ENCODE measurements at regions of chrX and their contacts with region 1.

Region 1: DNA sequence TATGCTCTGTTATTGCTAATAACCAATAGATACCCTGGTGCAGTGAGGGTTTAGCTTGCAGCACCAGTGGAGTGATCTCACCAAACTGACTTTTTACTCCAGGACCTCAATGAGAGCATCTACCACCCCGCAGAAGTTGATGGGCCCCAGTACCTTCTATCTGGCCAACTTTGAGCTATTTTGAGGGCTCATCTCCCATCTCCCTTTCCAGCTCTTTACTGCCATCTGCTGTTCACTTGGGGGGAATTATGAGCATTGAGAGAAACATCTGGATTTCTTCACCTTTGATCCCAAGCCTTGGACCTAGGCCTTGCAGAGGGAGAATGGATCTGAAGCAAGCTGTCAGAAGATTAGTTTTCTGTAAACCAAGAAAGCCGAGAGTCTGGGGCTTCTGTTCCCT is 143.6 kb downstream of the TMEM164 start:
- DNase-seq: peak; percentile 38
- H3K4me3 ChIP-seq: no peak overlapping the region
- H3K27ac ChIP-seq: no peak overlapping the region
- H3K4me1 ChIP-seq: no peaks in the 10 kb centered on the region
- CTCF ChIP-seq: peak; percentile 71

Region 2: DNA sequence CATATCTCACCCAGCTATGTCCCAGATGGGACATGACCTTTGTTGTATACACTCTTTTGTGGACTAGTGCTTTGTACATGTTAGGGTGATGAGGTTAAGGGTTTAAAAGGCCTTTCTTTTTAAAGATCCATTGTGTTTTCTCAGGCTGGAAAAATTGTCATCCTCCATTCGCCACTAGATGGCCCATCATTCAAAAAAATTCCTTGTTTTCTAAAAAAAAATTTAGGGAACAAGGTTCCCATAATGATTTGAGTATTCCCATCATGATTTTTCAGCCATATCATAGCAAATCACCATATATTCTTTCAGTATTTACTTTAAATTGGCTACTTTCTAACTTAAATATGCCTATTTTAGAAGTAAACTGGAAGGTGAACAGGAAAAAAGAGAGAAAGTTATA is 235.5 kb before region 1 on chrX:
- CTCF ChIA-PET with region 1: no interaction called
- POLR2A ChIA-PET with region 1: no interaction called
- intact Hi-C with region 1: loop called (anchors 10 kb)
- DNase-seq: no peak
- H3K4me3 ChIP-seq: no peak overlapping the region
- H3K27ac ChIP-seq: no peak overlapping the region
- H3K4me1 ChIP-seq: no peaks in the 10 kb centered on the region
- CTCF ChIP-seq: peak; percentile 58

Region 3: GRCh38 chrX:109934434-109934833 is 212.1 kb before region 1 on chrX:
- CTCF ChIA-PET with region 1: no interaction called
- POLR2A ChIA-PET with region 1: no interaction called
- intact Hi-C with region 1: no loop called
- DNase-seq: no peak
- H3K4me3 ChIP-seq: no peak overlapping the region
- H3K27ac ChIP-seq: no peak overlapping the region
- H3K4me1 ChIP-seq: no peaks in the 10 kb centered on the region
- CTCF ChIP-seq: no peak

Region 4: GRCh38 chrX:110060846-110061537 is 85.5 kb before region 1 on chrX:
- CTCF ChIA-PET with region 1: no interaction called
- POLR2A ChIA-PET with region 1: no interaction called
- intact Hi-C with region 1: no loop called
- DNase-seq: no peak
- H3K4me3 ChIP-seq: no peak overlapping the region
- H3K27ac ChIP-seq: no peak overlapping the region
- H3K4me1 ChIP-seq: no peaks in the 10 kb centered on the region
- CTCF ChIP-seq: no peak